Transverse colon (tissue), 4 donors: ENCODE measurements at regions of chr10 and their contacts with region 1.

Region 1: GRCh38 chr10:86710987-86711512 is 42.7 kb downstream of the LDB3 start:
- DNase-seq: peak; percentile 91
- H3K4me3 ChIP-seq: peak overlapping the region; percentile 63 to 89 (median 77)
- H3K27ac ChIP-seq: peak overlapping the region; percentile 93 to 98 (median 97)
- H3K4me1 ChIP-seq: peaks cover 8 to 15% (median 13%) of the 10 kb centered on the region in 4 donors
- H3K27me3 ChIP-seq: no peaks in the 10 kb centered on the region
- CTCF ChIP-seq: peak; percentile 76 to 97 (median 82)
- EP300 ChIP-seq: no peak
- POLR2A ChIP-seq: peak; percentile 71

Region 2: GRCh38 chr10:86755740-86756510 is 44.9 kb after region 1 on chr10:
- in situ Hi-C with region 1: no loop called
- intact Hi-C with region 1: loop called (anchors 5 kb)
- DNase-seq: peak; percentile 93
- H3K4me3 ChIP-seq: peak overlapping the region; percentile 59 to 90 (median 80)
- H3K27ac ChIP-seq: peak overlapping the region; percentile 95 to 99 (median 98)
- H3K4me1 ChIP-seq: peaks cover 0 to 69% (median 31%) of the 10 kb centered on the region in 4 donors
- H3K27me3 ChIP-seq: no peaks in the 10 kb centered on the region
- CTCF ChIP-seq: no peak
- EP300 ChIP-seq: peak; percentile 31
- POLR2A ChIP-seq: peak; percentile 84

Region 3: GRCh38 chr10:86899670-86900276 is 188.7 kb after region 1 on chr10:
- in situ Hi-C with region 1: loop called in 2 of 4 experiments (anchors 5 to 10 kb)
- intact Hi-C with region 1: loop called (anchors 2 kb)
- DNase-seq: peak; percentile 71
- H3K4me3 ChIP-seq: no peak overlapping the region
- H3K27ac ChIP-seq: peak overlapping the region in 3 of 4 donors; percentile 48 to 57 (median 49)
- H3K4me1 ChIP-seq: peaks cover 4 to 23% (median 10%) of the 10 kb centered on the region in 4 donors
- H3K27me3 ChIP-seq: no peaks in the 10 kb centered on the region
- CTCF ChIP-seq: peak; percentile 70 to 83 (median 76)
- EP300 ChIP-seq: no peak
- POLR2A ChIP-seq: no peak